B cell (primary cell): ENCODE measurements at regions of chr13 and their contacts with region 1.

Region 1: DNA sequence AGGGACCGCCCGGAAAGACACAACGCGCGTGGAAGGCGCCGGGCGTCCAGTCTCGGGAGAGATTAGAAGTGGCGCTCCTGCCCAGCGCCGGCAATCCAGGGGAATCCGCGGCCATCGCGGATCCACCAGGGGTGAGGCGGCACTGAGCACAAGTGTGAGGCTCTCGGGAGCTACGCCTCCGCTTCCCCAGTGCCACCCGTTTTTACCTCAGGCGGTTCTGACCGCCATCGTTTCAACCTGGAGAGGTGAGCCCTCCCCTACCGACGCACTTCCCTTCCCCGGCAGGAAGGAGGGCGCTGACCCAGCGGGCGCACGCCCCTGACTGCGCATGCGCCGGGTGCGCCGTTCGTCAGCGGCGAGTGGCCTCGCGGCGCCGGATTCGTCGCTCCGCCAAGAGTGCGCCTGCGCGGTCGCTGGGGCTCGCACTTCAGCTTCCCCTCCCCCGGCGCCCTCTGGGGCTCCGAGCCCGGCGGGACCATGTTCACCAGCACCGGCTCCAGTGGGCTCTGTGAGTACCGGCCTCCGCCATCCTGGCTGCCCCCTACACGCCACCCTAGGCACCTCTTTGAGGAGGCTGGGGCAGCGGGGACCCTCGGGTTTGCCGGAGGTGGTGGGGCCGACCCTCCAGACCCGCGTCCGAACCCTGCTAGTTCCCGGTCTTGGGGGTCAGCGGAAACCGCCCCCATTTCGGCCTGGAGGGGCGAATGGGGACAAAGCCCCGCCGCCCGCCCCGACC is at the start of gene UBAC2:
- DNase-seq: peak; percentile 98
- ATAC-seq: peak; percentile 73
- H3K4me3 ChIP-seq: peak within 1 kb of the TSS; percentile 71 to 97 (median 92)
- H3K4me3 Mint-ChIP-seq: peak within 1 kb of the TSS; percentile 97
- H3K27ac ChIP-seq: peak within 1 kb of the TSS; percentile 97
- H3K27ac Mint-ChIP-seq: peak within 1 kb of the TSS; percentile 94
- H3K4me1 ChIP-seq: peaks cover 38 to 46% of the 10 kb centered on the region in 2 donors
- H3K4me1 Mint-ChIP-seq: peaks cover 54% of the 10 kb centered on the region
- H3K27me3 ChIP-seq: no peaks in the 10 kb centered on the region
- H3K27me3 Mint-ChIP-seq: no peaks in the 10 kb centered on the region
- CTCF ChIP-seq: no peak
- total RNA-seq, gene UBAC2: 52.9 and 56.3 TPM in 2 replicates

Region 2: GRCh38 chr13:98570929-98571372 is 629.6 kb before region 1 on chr13:
- CTCF ChIA-PET with region 1: no interaction called
- POLR2A ChIA-PET with region 1: no interaction called
- intact Hi-C with region 1: loop called (anchors 5 kb)
- DNase-seq: peak; percentile 80
- ATAC-seq: peak; percentile 88
- H3K4me3 ChIP-seq: peak overlapping the region; percentile 41 to 73 (median 43)
- H3K4me3 Mint-ChIP-seq: peak overlapping the region; percentile 91
- H3K27ac ChIP-seq: peak overlapping the region; percentile 78
- H3K27ac Mint-ChIP-seq: peak overlapping the region; percentile 95
- H3K4me1 ChIP-seq: peaks cover 85 to 90% of the 10 kb centered on the region in 2 donors
- H3K4me1 Mint-ChIP-seq: peaks cover 93% of the 10 kb centered on the region
- H3K27me3 ChIP-seq: no peaks in the 10 kb centered on the region
- H3K27me3 Mint-ChIP-seq: no peaks in the 10 kb centered on the region
- CTCF ChIP-seq: no peak

Region 3: GRCh38 chr13:98772794-98773452 is 427.7 kb before region 1 on chr13:
- CTCF ChIA-PET with region 1: no interaction called
- POLR2A ChIA-PET with region 1: no interaction called
- intact Hi-C with region 1: no loop called
- DNase-seq: no peak
- ATAC-seq: no peak
- H3K4me3 ChIP-seq: no peak overlapping the region
- H3K4me3 Mint-ChIP-seq: no peak overlapping the region
- H3K27ac ChIP-seq: no peak overlapping the region
- H3K27ac Mint-ChIP-seq: no peak overlapping the region
- H3K4me1 ChIP-seq: no peaks in the 10 kb centered on the region
- H3K4me1 Mint-ChIP-seq: no peaks in the 10 kb centered on the region
- H3K27me3 ChIP-seq: peaks cover 0 to 3% (median 0%) of the 10 kb centered on the region in 4 experiments
- H3K27me3 Mint-ChIP-seq: peaks cover 15% of the 10 kb centered on the region
- CTCF ChIP-seq: no peak

Region 4: GRCh38 chr13:99087096-99087953 is 113.3 kb before region 1 on chr13:
- CTCF ChIA-PET with region 1: no interaction called
- POLR2A ChIA-PET with region 1: no interaction called
- intact Hi-C with region 1: loop called (anchors 5 kb)
- DNase-seq: peak; percentile 94
- ATAC-seq: peak; percentile 74
- H3K4me3 ChIP-seq: peak overlapping the region; percentile 65 to 89 (median 88)
- H3K4me3 Mint-ChIP-seq: peak overlapping the region; percentile 100
- H3K27ac ChIP-seq: peak overlapping the region; percentile 82 to 92
- H3K27ac Mint-ChIP-seq: peak overlapping the region; percentile 99
- H3K4me1 ChIP-seq: peaks cover 26 to 27% of the 10 kb centered on the region in 2 donors
- H3K4me1 Mint-ChIP-seq: peaks cover 32% of the 10 kb centered on the region
- H3K27me3 ChIP-seq: peaks cover 0 to 3% (median 0%) of the 10 kb centered on the region in 4 experiments
- H3K27me3 Mint-ChIP-seq: peaks cover 5% of the 10 kb centered on the region
- CTCF ChIP-seq: peak; percentile 42

Region 5: DNA sequence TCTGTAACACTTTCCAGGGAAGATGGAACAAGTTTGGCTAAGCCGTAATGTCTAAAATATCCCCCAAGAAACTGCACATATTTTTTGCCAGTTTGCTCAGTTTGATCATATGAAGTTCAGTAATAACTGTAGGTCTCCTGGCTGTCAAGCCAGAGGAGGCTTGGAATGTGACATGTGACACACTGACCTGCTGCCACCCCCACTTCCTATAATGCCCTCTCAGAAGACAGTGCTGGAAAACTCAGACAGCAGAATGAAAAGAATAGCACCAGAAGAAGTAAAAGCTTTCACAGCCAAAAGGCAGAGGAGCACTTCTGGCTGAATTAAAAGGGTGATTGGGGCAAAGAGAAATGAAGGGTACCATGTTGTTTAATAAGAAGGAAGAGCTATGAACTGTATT is 67.4 kb before region 1 on chr13:
- CTCF ChIA-PET with region 1: no interaction called
- POLR2A ChIA-PET with region 1: no interaction called
- intact Hi-C with region 1: no loop called
- DNase-seq: no peak
- ATAC-seq: no peak
- H3K4me3 ChIP-seq: no peak overlapping the region
- H3K4me3 Mint-ChIP-seq: no peak overlapping the region
- H3K27ac ChIP-seq: no peak overlapping the region
- H3K27ac Mint-ChIP-seq: no peak overlapping the region
- H3K4me1 ChIP-seq: no peaks in the 10 kb centered on the region
- H3K4me1 Mint-ChIP-seq: no peaks in the 10 kb centered on the region
- H3K27me3 ChIP-seq: peaks cover 0 to 4% (median 0%) of the 10 kb centered on the region in 4 experiments
- H3K27me3 Mint-ChIP-seq: peaks cover 4% of the 10 kb centered on the region
- CTCF ChIP-seq: no peak

Region 6: DNA sequence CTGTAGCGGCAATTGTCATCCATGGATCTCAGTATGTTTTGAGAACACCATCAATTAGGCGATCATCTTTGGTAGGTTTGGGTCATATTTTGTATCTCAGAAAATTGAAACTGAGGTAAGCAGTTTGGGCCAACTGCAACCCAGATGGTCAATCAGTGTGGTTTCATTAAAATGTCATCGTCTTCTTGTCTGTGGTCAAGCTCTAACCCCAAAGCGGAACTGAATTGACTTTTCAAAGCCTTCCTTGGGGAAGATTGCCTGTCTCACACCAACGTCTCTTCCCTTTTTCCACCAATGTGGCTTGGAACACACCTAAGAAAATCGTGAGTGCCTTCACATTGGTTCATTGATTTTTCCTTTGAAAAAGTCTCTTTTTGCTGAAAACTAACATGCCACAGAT is 56.3 kb before region 1 on chr13:
- CTCF ChIA-PET with region 1: no interaction called
- POLR2A ChIA-PET with region 1: no interaction called
- intact Hi-C with region 1: no loop called
- DNase-seq: no peak
- ATAC-seq: no peak
- H3K4me3 ChIP-seq: no peak overlapping the region
- H3K4me3 Mint-ChIP-seq: no peak overlapping the region
- H3K27ac ChIP-seq: no peak overlapping the region
- H3K27ac Mint-ChIP-seq: no peak overlapping the region
- H3K4me1 ChIP-seq: peaks cover 0 to 3% of the 10 kb centered on the region in 2 donors
- H3K4me1 Mint-ChIP-seq: peaks cover 4% of the 10 kb centered on the region
- H3K27me3 ChIP-seq: peaks cover 0 to 21% (median 12%) of the 10 kb centered on the region in 4 experiments
- H3K27me3 Mint-ChIP-seq: peaks cover 36% of the 10 kb centered on the region
- CTCF ChIP-seq: no peak

Region 7: DNA sequence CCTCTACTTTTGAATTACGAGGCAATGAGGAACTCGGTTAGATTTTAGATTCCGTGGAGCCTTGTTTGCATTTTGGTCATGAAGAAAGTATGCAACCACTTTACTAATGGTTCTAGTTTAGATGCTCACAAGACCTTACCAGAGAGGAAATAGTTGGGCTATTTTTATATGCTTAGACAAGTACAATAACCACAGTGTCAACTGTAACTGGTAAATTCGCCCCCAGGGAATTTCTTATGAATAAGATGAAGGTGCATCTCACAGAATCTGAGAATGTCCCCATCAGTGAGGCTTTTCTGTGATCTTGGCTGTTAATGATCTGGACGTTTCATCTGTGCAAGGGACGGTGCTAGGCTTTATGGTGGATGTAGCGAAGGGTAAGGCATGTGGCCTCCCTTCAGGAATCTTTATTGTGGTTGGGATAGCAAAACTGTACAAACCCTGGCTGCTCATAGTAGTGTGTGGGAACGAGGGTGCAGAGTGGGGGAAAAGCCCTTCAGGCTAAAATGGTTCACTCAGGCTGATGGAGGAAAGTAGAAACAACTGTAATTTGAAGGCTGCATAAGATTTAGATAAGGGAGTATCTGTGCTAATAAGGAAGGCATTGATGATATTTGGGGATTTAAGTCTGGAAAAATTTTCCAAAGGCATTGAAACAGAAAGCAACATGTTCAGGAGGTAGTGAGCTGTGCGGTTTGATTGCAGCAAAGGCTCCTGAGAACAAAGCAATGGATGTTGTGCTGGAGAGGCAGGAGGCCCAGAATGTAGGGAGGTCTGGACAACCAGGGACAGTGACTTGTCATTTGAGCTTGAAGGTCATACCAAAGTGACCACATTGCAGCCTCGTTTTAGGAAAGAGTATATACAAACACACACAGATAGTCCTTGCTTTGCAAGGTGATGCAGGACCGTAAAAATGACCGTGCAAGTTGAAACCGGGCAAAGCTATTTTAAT is 28.4 kb after region 1 on chr13:
- CTCF ChIA-PET with region 1: interaction called, 20 read pairs
- POLR2A ChIA-PET with region 1: interaction called, 5 read pairs
- intact Hi-C with region 1: loop called (anchors 1 kb)
- DNase-seq: peak; percentile 87
- ATAC-seq: peak; percentile 79
- H3K4me3 ChIP-seq: peak overlapping the region; percentile 16 to 56 (median 49)
- H3K4me3 Mint-ChIP-seq: peak overlapping the region; percentile 86
- H3K27ac ChIP-seq: peak overlapping the region; percentile 65 to 74
- H3K27ac Mint-ChIP-seq: peak overlapping the region; percentile 80
- H3K4me1 ChIP-seq: peaks cover 84 to 86% of the 10 kb centered on the region in 2 donors
- H3K4me1 Mint-ChIP-seq: peaks cover 77% of the 10 kb centered on the region
- H3K27me3 ChIP-seq: no peaks in the 10 kb centered on the region
- H3K27me3 Mint-ChIP-seq: no peaks in the 10 kb centered on the region
- CTCF ChIP-seq: no peak

Region 8: GRCh38 chr13:99258210-99258860 is 57.7 kb after region 1 on chr13 and contains the start of gene GPR18:
- CTCF ChIA-PET with region 1: interaction called, 349 read pairs
- POLR2A ChIA-PET with region 1: interaction called, 17 read pairs
- intact Hi-C with region 1: loop called (anchors 1 kb)
- DNase-seq: peak; percentile 75
- ATAC-seq: peak; percentile 66
- H3K4me3 ChIP-seq: peak within 1 kb of the TSS; percentile 60 to 98 (median 79)
- H3K4me3 Mint-ChIP-seq: peak within 1 kb of the TSS; percentile 98
- H3K27ac ChIP-seq: peak within 1 kb of the TSS; percentile 86 to 90
- H3K27ac Mint-ChIP-seq: peak within 1 kb of the TSS; percentile 96
- H3K4me1 ChIP-seq: peaks cover 57 to 68% of the 10 kb centered on the region in 2 donors
- H3K4me1 Mint-ChIP-seq: peaks cover 81% of the 10 kb centered on the region
- H3K27me3 ChIP-seq: no peaks in the 10 kb centered on the region
- H3K27me3 Mint-ChIP-seq: no peaks in the 10 kb centered on the region
- CTCF ChIP-seq: no peak
- total RNA-seq, gene GPR18: 17.6 and 19.1 TPM in 2 replicates

Region 9: GRCh38 chr13:99264051-99264450 is 63.5 kb after region 1 on chr13:
- CTCF ChIA-PET with region 1: interaction called, 349 read pairs
- POLR2A ChIA-PET with region 1: interaction called, 11 read pairs
- intact Hi-C with region 1: loop called (anchors 1 kb)
- DNase-seq: peak; percentile 56
- ATAC-seq: peak; percentile 52
- H3K4me3 ChIP-seq: peak overlapping the region in 1 of 5 experiments; percentile 5
- H3K4me3 Mint-ChIP-seq: peak overlapping the region; percentile 35
- H3K27ac ChIP-seq: peak overlapping the region; percentile 21 to 63
- H3K27ac Mint-ChIP-seq: peak overlapping the region; percentile 81
- H3K4me1 ChIP-seq: peaks cover 67 to 68% of the 10 kb centered on the region in 2 donors
- H3K4me1 Mint-ChIP-seq: peaks cover 67% of the 10 kb centered on the region
- H3K27me3 ChIP-seq: no peaks in the 10 kb centered on the region
- H3K27me3 Mint-ChIP-seq: no peaks in the 10 kb centered on the region
- CTCF ChIP-seq: no peak